Aorta (tissue), 5 donors: ENCODE measurements at regions of chr19 and their contacts with region 1.

Region 1: GRCh38 chr19:50414864-50415660 is 3.7 kb upstream of the SPIB start:
- DNase-seq: peak; percentile 85 to 94
- ATAC-seq: peak; percentile 70
- H3K4me3 ChIP-seq: no peak overlapping the region
- H3K27ac ChIP-seq: no peak overlapping the region
- H3K4me1 ChIP-seq: no peaks in the 10 kb centered on the region
- H3K27me3 ChIP-seq: no peaks in the 10 kb centered on the region

Region 2: GRCh38 chr19:50368649-50369570 is 46.2 kb before region 1 on chr19:
- intact Hi-C with region 1: loop called (anchors 2 kb)
- DNase-seq: peak; percentile 89 to 92
- ATAC-seq: peak; percentile 96
- H3K4me3 ChIP-seq: peak overlapping the region; percentile 48 to 60
- H3K27ac ChIP-seq: peak overlapping the region in 1 of 2 donors; percentile 70
- H3K4me1 ChIP-seq: no peaks in the 10 kb centered on the region
- H3K27me3 ChIP-seq: no peaks in the 10 kb centered on the region